ENCODE measurements at regions of chr3 and their contacts with region 1.

Region 1: GRCh38 chr3:107271787-107272387 is 105.4 kb upstream of the CCDC54 start:
- DNase-seq: peak; percentile 4
- ATAC-seq: peak; percentile 83
- H3K4me3 ChIP-seq: no peak overlapping the region
- H3K27ac ChIP-seq: no peak overlapping the region
- H3K4me1 ChIP-seq: no peaks in the 10 kb centered on the region
- H3K27me3 ChIP-seq: no peaks in the 10 kb centered on the region; the same call in 1 of the 2 replicates
- CTCF ChIP-seq: peak; percentile 75

Region 2: DNA sequence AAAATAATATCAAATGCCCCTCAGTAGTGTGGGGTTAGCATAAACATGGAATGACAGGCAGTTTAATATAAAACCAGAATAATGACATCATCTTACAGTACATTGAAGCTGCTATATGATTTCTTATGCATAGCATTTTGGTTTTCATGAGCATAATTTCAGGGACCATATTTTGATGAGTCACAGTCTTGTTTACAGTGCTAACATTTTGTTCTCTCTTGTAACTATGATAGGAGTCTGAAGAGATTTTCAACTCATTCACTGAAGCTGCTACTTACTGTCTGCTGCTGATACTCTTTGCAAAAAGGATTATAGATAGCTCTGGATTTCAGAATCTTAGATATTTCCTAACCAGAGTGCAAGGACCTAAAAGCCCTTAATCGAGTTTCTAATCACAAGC is 12.7 kb after region 1 on chr3:
- CTCF ChIA-PET with region 1: no interaction called
- POLR2A ChIA-PET with region 1: no interaction called
- in situ Hi-C with region 1: no loop called
- intact Hi-C with region 1: no loop called
- DNase-seq: no peak
- ATAC-seq: no peak
- H3K4me3 ChIP-seq: no peak overlapping the region
- H3K27ac ChIP-seq: no peak overlapping the region
- H3K4me1 ChIP-seq: no peaks in the 10 kb centered on the region
- H3K27me3 ChIP-seq: no peaks in the 10 kb centered on the region; the same call in 1 of the 2 replicates
- CTCF ChIP-seq: no peak

Region 3: DNA sequence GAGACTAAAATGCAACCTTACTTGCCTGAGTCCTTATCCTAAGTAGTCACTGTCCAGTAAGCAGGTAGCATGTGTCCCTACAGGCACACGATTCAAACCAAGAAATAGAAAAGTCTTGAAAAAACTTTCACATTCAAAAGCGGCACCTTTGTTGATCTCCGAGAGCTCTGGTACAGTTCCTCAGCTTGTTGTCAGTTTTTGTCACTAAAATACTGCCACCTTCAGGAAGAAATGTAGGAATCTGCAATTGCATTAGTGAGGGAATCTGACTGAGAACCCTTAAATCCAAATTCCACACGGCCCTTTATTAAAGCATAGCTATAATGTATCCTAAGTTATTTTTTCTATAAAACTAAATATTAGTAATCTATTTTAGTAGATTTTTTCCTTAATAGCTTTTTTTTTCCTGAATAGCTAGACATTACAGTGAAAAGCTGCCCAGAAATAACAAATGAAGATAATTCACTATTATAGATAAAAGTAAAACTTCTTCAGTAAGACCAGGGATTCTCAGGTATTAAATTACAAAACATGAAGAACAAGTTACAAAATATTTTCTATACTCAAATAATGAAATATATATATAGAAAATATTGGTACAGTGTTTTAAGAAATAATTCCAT is 149.4 kb after region 1 on chr3:
- CTCF ChIA-PET with region 1: interaction called, 10 read pairs
- POLR2A ChIA-PET with region 1: no interaction called
- in situ Hi-C with region 1: no loop called
- intact Hi-C with region 1: loop called (anchors 2 kb)
- DNase-seq: peak; percentile 54
- ATAC-seq: peak; percentile 80; the same call in 1 of the 2 replicates
- H3K4me3 ChIP-seq: no peak overlapping the region; a peak in 1 of 4 replicates
- H3K27ac ChIP-seq: no peak overlapping the region
- H3K4me1 ChIP-seq: peaks cover 4% of the 10 kb centered on the region
- H3K27me3 ChIP-seq: peaks cover 11% of the 10 kb centered on the region
- CTCF ChIP-seq: peak; percentile 80

Region 4: GRCh38 chr3:107429320-107430181 is 157.7 kb after region 1 on chr3:
- CTCF ChIA-PET with region 1: no interaction called
- POLR2A ChIA-PET with region 1: no interaction called
- in situ Hi-C with region 1: no loop called
- intact Hi-C with region 1: loop called (anchors 2 kb)
- DNase-seq: peak; percentile 61
- ATAC-seq: peak; percentile 80
- H3K4me3 ChIP-seq: peak overlapping the region in 1 of 2 experiments; percentile 75; a peak in 1 of 4 replicates
- H3K27ac ChIP-seq: no peak overlapping the region
- H3K4me1 ChIP-seq: peaks cover 12% of the 10 kb centered on the region
- H3K27me3 ChIP-seq: no peaks in the 10 kb centered on the region; the same call in 1 of the 2 replicates
- CTCF ChIP-seq: peak; percentile 96

Region 5: GRCh38 chr3:107545680-107546120 is 273.8 kb after region 1 on chr3:
- CTCF ChIA-PET with region 1: interaction called, 3 read pairs
- POLR2A ChIA-PET with region 1: no interaction called
- in situ Hi-C with region 1: no loop called
- intact Hi-C with region 1: loop called (anchors 5 kb)
- DNase-seq: no peak
- ATAC-seq: no peak
- H3K4me3 ChIP-seq: no peak overlapping the region
- H3K27ac ChIP-seq: no peak overlapping the region
- H3K4me1 ChIP-seq: no peaks in the 10 kb centered on the region
- H3K27me3 ChIP-seq: no peaks in the 10 kb centered on the region
- CTCF ChIP-seq: no peak

Region 6: DNA sequence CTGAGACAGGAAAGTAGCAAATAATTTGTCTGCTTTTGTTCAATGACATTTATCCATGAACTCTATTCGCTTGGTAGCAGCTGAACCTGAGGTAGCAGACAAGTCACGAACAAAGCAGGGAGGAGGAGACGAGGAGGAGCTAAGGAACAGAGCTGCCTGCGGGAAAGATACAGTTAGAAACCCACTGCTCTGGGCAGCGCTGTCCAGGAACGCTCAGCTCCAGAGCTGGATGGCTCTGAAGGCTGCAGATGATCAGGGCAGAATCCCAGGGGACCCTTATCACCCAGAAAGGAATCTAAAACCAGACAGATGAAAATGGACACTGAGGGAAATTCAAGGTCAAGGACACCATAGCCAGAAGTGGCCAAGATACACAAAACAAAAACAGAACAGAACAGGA is 561.2 kb after region 1 on chr3:
- CTCF ChIA-PET with region 1: no interaction called
- POLR2A ChIA-PET with region 1: interaction called, 11 read pairs
- in situ Hi-C with region 1: no loop called
- intact Hi-C with region 1: no loop called
- DNase-seq: no peak
- ATAC-seq: no peak; the same call in 1 of the 2 replicates
- H3K4me3 ChIP-seq: no peak overlapping the region
- H3K27ac ChIP-seq: no peak overlapping the region
- H3K4me1 ChIP-seq: no peaks in the 10 kb centered on the region
- H3K27me3 ChIP-seq: no peaks in the 10 kb centered on the region
- CTCF ChIP-seq: no peak

Measured in Panc1 (cell line).